ENCODE measurements at regions of chr16 and their contacts with region 1.

Region 1: DNA sequence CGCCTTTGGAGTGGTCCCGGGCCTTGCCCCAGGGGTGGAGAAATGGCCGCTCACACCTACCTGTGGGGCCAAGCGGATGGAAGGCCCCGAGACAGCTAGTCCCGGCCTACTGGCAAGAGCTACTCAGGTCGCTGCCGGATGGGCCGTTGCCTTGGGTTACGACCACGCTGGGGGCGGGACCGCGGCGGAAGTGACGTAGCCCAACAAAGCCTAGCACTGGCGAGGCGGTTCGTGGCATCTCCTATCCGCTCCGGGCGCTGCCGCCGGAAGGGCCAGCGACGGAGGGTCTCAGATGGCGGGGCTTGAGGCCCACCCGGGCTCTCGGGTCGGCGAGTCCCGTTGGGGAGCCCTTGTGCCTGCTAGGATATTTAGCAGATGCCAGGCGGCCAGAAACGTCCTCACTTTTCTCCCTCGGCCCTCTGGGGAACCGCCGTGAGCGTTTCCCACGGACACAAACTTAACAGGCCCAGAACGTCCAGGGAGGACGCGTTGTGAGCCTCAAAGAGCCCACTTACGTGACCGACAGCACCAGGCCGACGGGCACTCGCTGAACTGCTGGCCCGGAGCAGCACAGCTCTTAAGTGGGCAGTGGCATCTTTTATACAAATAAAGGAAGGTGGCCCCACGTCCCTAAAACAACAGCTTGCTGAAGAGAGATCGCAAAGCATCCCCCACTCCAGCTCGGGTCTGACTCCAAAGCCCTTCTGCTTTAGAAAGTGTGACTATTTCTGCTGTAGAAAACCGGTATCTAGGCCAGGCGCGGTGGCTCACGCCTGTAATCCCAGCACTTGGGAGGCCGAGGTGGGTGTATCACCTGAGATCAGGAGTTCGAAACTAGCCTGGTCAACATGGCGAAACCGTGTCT is at the start of gene C16orf46:
- DNase-seq: peak in 9 of 10 donors; percentile 91 to 98 (median 96)
- ATAC-seq: peak; percentile 77 to 82
- H3K4me3 Mint-ChIP-seq: peak within 1 kb of the TSS in 3 of 10 donors; percentile 45 to 58 (median 55)
- H3K27ac Mint-ChIP-seq: peak within 1 kb of the TSS in 5 of 10 donors; percentile 24 to 91 (median 43)
- H3K4me1 Mint-ChIP-seq: peaks cover 0 to 8% (median 2%) of the 10 kb centered on the region in 4 donors
- H3K27me3 Mint-ChIP-seq: peaks cover 0 to 2% (median 0%) of the 10 kb centered on the region in 5 donors
- polyA plus RNA-seq, gene C16orf46: 0.14 to 0.23 (median 0.16) TPM

Region 2: DNA sequence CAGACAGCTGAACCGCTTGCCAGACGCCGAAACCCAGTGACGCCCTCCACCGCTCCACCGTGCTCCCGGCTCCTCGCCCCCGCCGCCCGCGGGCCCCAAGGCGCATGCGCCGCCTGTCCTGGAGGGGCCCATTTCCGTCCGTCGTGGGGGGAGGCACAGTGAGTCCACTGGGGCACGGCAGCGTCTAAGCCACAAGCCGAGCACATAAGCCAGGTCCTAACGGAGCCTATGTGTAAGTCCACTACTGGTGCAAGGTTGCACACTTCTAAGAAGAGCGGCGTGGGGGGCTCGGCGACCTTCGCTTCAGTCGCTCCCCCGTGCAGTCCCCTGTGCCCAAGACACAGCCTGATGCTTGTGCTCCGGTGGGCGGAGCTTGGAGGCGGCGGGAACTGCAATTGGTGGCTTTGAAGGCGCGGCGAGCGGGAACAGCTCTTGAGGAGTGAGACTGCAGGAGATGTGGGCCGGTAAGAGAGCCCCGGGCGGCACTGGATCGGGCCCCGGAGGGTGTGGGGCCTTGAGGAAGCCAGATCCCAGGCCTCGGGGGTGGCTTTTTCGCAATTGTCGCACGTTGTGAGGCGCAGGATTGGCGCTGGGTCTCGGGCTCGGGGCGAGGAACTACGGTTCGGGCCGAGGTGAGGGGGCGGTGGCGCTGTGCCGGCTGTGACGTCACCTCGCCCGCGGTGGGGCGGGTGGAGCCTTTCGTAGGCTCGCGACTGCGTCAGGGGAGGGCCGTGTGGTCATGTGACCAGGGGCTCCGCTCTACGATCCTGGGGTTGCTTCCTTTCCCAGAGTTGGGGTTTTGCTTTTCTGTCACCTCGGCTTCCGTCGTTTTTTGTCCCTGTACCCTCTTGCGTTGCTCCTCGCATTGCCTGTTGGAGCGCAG is 70.3 kb before region 1 on chr16 and contains the starts of genes CENPN and CMC2:
- POLR2A ChIA-PET with region 1: interaction called, 16 read pairs
- DNase-seq: peak; percentile 94 to 100 (median 98)
- ATAC-seq: peak; percentile 83 to 85
- H3K4me3 Mint-ChIP-seq: peak within 1 kb of the TSS; percentile 88 to 100 (median 95)
- H3K27ac Mint-ChIP-seq: peak within 1 kb of the TSS; percentile 94 to 100 (median 100)
- H3K4me1 Mint-ChIP-seq: peaks cover 7 to 53% (median 43%) of the 10 kb centered on the region in 4 donors
- H3K27me3 Mint-ChIP-seq: peaks cover 0 to 3% (median 0%) of the 10 kb centered on the region in 5 donors
- polyA plus RNA-seq, gene CENPN: 1.7 to 4.5 (median 3.0) TPM
- polyA plus RNA-seq, gene CMC2: 78.2 to 84.6 (median 80.2) TPM

Region 3: DNA sequence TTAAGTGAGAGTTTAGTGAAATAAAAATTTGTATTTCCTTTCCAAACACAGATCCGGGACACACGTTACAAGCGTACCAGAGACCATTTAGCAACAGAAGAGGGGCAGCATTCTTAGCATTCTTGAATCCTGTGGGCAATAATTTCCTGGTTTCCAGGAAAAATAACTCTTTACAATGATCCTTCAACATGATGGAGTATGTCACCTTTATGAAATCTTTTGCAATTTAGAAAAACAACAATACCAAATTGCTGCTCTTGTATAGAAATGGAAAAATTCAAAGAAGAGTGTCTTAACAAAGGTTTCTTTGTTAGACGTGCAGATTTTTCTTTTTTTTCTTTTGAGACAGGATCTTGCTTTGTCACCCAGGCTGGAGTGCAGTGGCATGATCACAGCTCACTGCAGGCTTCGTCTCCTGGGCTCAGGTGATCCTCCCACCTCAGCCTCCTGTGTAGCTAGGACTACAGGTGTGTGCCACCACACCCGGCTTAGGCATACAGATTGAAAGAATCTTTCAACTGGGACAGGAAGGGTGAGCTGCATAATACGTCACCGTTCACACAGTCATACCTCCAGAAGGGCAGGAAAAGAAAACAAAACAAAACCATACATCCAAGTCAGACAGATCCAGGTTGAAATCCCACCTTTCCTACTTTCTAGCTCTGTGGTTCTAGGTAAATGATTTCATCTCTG is 29.6 kb after region 1 on chr16:
- POLR2A ChIA-PET with region 1: no interaction called
- DNase-seq: no peak
- ATAC-seq: no peak
- H3K4me3 Mint-ChIP-seq: no peak overlapping the region
- H3K27ac Mint-ChIP-seq: no peak overlapping the region
- H3K4me1 Mint-ChIP-seq: peaks cover 0 to 2% (median 0%) of the 10 kb centered on the region in 4 donors
- H3K27me3 Mint-ChIP-seq: peaks cover 2 to 13% (median 8%) of the 10 kb centered on the region in 5 donors

Measured in naive thymus-derived CD8-positive, alpha-beta T cell (primary cell).